Sciatic nerve (tissue), 2 donors: ENCODE measurements at regions of chr1 and their contacts with region 1.

Region 1: GRCh38 chr1:181152892-181153633 is 64.6 kb downstream of the IER5 start:
- DNase-seq: peak; percentile 70
- ATAC-seq: peak; percentile 95

Region 2: GRCh38 chr1:180888870-180889269 is 264.2 kb before region 1 on chr1:
- intact Hi-C with region 1: loop called (anchors 5 kb)
- DNase-seq: no peak
- ATAC-seq: no peak